ENCODE measurements at regions of chr19 and their contacts with region 1.

Region 1: GRCh38 chr19:1401138-1401888 is at the start of gene GAMT:
- DNase-seq: no peak
- H3K4me3 ChIP-seq: peak within 1 kb of the TSS; percentile 36 to 70 (median 54)
- H3K27ac ChIP-seq: peak within 1 kb of the TSS in 2 of 4 donors; percentile 33 to 39
- H3K4me1 ChIP-seq: peaks cover 0 to 22% (median 20%) of the 10 kb centered on the region in 4 donors
- H3K27me3 ChIP-seq: peaks cover 0 to 12% (median 5%) of the 10 kb centered on the region in 3 donors
- CTCF ChIP-seq: peak in 1 of 4 experiments; percentile 58
- EP300 ChIP-seq: no peak
- POLR2A ChIP-seq: no peak
- total RNA-seq, gene GAMT: 7.8 to 16.6 (median 11.5) TPM

Region 2: GRCh38 chr19:566403-566802 is 834.9 kb before region 1 on chr19:
- intact Hi-C with region 1: no loop called
- DNase-seq: peak; percentile 96
- H3K4me3 ChIP-seq: peak overlapping the region in 3 of 4 donors; percentile 8 to 24 (median 21)
- H3K27ac ChIP-seq: peak overlapping the region; percentile 38 to 91 (median 80)
- H3K4me1 ChIP-seq: peaks cover 0 to 23% (median 17%) of the 10 kb centered on the region in 4 donors
- H3K27me3 ChIP-seq: no peaks in the 10 kb centered on the region
- CTCF ChIP-seq: no peak
- EP300 ChIP-seq: peak; percentile 89 to 96 (median 94)
- POLR2A ChIP-seq: no peak

Region 3: DNA sequence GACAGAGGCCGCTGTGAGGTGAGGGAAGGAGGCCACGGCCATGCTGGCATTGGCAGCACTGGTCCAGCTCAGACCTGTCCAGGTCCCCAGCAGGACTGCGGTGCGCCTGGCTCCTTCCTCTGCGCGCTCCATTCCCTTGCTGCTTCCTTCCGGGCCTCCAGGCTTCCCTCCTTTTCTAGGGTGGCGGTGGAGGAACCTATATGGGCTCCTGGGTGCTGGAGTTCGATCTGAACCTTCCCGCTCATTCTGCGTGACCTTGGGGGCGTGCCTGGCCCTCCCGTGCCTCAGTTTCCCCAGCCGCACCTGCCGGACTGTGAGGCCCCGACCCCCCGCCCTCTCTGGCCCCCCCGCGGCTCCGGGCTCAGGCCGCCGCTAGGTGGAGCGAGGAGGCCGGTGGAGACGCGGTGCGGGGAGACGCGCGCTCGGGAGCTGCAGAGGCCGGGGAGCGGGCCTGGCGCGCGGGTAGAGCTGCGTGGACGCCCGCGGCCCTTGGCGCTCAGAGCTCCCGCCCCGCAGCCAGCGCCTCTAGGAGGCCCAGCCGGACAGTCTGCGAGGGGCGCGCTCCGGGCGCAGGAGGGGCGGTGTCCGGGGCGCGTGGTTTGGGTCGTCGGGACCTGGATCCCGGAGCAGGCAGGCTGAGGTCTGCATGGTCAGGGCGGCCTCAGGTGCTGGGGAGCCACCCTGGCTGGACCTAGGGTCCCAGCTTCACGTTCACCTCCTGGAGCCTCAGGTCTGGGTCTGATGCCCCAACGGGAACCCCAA is 85.7 kb before region 1 on chr19:
- intact Hi-C with region 1: loop called (anchors 5 kb)
- DNase-seq: no peak
- H3K4me3 ChIP-seq: peak overlapping the region in 3 of 4 donors; percentile 33 to 38 (median 35)
- H3K27ac ChIP-seq: no peak overlapping the region
- H3K4me1 ChIP-seq: peaks cover 0 to 12% (median 11%) of the 10 kb centered on the region in 4 donors
- H3K27me3 ChIP-seq: peaks cover 4 to 63% (median 44%) of the 10 kb centered on the region in 3 donors
- CTCF ChIP-seq: peak; percentile 38 to 76 (median 54)
- EP300 ChIP-seq: no peak
- POLR2A ChIP-seq: no peak